OCI-LY7 (cell line): ENCODE measurements at regions of chr4 and their contacts with region 1.

Region 1: DNA sequence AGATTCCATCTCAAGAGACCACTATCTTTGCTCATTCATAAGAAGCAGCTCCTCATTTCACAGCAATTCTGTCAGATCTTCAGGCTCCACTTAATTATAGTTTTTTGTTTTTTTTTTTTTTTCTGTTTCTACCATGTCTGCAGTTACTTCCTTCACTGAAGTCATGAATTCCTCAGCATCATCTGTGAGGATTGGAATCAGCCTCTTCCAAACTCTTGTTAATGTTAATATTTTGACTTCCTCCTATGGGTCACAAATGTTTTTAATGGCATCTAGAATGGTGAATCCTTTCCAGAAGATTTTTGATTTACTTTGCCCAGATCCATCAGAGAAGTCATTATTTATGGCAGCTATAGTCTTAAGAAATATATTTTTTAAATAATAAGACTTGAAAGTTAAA is 53.1 kb downstream of the BMP2K start:
- DNase-seq: no peak
- H3K4me3 ChIP-seq: no peak overlapping the region
- H3K27ac ChIP-seq: no peak overlapping the region
- H3K4me1 ChIP-seq: no peaks in the 10 kb centered on the region
- CTCF ChIP-seq: no peak

Region 2: DNA sequence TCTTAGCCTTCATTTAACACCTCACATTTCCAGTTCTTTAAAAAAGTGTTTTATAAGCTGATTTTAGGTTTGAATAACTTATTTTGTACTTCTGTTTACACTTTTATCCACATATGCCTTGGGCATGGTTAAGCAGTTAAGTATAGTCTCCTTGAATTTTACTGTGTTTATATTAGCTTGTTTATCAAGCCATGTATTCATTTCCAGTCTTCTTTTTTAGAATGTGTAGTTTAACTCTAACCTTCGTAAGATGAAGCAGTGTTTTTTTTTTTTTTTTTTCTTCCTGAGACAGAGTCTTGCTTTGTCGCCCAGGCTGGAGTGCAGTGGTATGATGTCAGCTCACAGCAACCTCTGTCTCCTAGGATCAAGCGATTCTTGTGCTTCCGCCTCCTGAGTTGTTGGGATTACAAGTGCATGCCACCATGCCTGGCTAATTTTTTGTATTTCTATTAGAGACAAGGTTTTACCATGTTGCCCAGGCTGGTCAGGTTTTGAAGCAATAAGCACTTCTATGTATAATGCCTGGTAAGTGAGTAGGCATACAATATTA is 10.7 kb before region 1 on chr4:
- CTCF ChIA-PET with region 1: no interaction called
- POLR2A ChIA-PET with region 1: interaction called, 11 read pairs
- intact Hi-C with region 1: no loop called
- DNase-seq: no peak
- H3K4me3 ChIP-seq: no peak overlapping the region
- H3K27ac ChIP-seq: no peak overlapping the region
- H3K4me1 ChIP-seq: no peaks in the 10 kb centered on the region
- CTCF ChIP-seq: no peak